Gastrocnemius medialis (tissue), 4 donors: ENCODE measurements at regions of chr15 and their contacts with region 1.

Region 1: GRCh38 chr15:30038667-30039523 is 43.9 kb upstream of the GOLGA8J start:
- DNase-seq: no peak
- ATAC-seq: no peak
- H3K4me3 ChIP-seq: no peak overlapping the region
- H3K27ac ChIP-seq: no peak overlapping the region
- H3K4me1 ChIP-seq: no peaks in the 10 kb centered on the region
- H3K27me3 ChIP-seq: no peaks in the 10 kb centered on the region
- CTCF ChIP-seq: no peak
- POLR2A ChIP-seq: no peak

Region 2: GRCh38 chr15:29900237-29901189 is 138.4 kb before region 1 on chr15:
- in situ Hi-C with region 1: no loop called
- intact Hi-C with region 1: no loop called
- DNase-seq: no peak
- ATAC-seq: no peak
- H3K4me3 ChIP-seq: no peak overlapping the region
- H3K27ac ChIP-seq: no peak overlapping the region
- H3K4me1 ChIP-seq: no peaks in the 10 kb centered on the region
- H3K27me3 ChIP-seq: no peaks in the 10 kb centered on the region
- CTCF ChIP-seq: no peak
- POLR2A ChIP-seq: no peak

Region 3: DNA sequence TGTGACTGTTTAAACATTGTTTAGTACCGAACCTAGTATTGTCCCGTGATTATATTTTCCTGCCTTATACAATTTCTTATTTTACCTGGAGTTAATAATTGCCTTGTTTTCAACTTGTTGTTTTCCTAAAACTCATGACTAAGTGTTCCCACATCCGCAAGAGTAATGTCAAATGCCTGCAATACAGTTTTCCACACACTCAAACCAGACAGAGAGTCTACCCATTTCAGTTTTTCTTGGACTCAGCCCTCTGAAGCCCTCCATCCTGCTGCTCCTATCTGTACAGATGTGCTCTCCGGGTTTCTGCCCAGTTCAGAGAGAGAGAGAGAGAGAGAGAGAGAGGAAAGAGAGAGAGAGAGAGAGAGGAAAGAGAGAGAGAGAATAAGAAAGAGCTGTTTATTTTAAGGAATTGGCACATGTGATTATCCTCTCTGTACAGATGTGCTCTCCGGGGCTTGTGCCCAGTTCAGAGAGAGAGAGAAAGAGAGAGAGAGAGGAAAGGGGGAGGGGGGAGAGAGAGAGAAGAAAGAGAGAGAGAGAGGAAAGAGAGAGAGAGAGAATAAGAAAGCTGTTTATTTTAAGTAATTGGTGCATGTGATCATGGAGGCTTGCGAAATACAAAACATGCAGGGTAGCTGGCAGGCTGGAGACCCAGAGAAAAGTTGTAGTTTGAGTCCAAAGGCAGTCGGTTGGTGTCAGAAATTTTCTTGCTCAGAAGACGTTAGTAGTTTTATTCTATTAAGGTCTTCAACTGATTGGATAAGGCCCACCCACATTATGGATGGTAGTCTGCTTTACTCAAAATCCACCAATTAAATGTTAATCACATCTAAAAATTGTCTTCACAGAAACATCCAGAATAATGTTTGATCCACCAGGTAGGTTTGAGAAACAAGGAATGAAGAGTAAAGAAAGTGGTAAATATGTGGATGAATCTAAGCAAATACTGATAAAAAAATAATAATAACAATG is 60.2 kb before region 1 on chr15:
- in situ Hi-C with region 1: loop called in 1 of 4 experiments (anchors 10 kb)
- intact Hi-C with region 1: no loop called
- DNase-seq: no peak
- ATAC-seq: no peak
- H3K4me3 ChIP-seq: no peak overlapping the region
- H3K27ac ChIP-seq: no peak overlapping the region
- H3K4me1 ChIP-seq: no peaks in the 10 kb centered on the region
- H3K27me3 ChIP-seq: no peaks in the 10 kb centered on the region
- CTCF ChIP-seq: no peak
- POLR2A ChIP-seq: no peak

Region 4: GRCh38 chr15:30073915-30074314 is 35.0 kb after region 1 on chr15:
- in situ Hi-C with region 1: no loop called
- intact Hi-C with region 1: no loop called
- DNase-seq: no peak
- ATAC-seq: no peak
- H3K4me3 ChIP-seq: no peak overlapping the region
- H3K27ac ChIP-seq: no peak overlapping the region
- H3K4me1 ChIP-seq: no peaks in the 10 kb centered on the region
- H3K27me3 ChIP-seq: peaks cover 0 to 2% (median 0%) of the 10 kb centered on the region in 3 donors
- CTCF ChIP-seq: no peak
- POLR2A ChIP-seq: no peak